ENCODE measurements at regions of chr22 and their contacts with region 1.

Region 1: GRCh38 chr22:36470162-36470993 is 11.1 kb downstream of the TXN2 start:
- DNase-seq: peak; percentile 87
- ATAC-seq: peak; percentile 80

Region 2: GRCh38 chr22:36301384-36301828 is 169.0 kb before region 1 on chr22:
- intact Hi-C with region 1: loop called (anchors 5 kb)
- DNase-seq: peak; percentile 84
- ATAC-seq: peak; percentile 63

Region 3: GRCh38 chr22:36323182-36323854 is 147.1 kb before region 1 on chr22:
- intact Hi-C with region 1: loop called (anchors 5 kb)
- DNase-seq: peak; percentile 82
- ATAC-seq: peak; percentile 67

Measured in Right ventricle myocardium superior (tissue), 1 donor.